H1 (cell line): ENCODE measurements at regions of chr18 and their contacts with region 1.

Region 1: DNA sequence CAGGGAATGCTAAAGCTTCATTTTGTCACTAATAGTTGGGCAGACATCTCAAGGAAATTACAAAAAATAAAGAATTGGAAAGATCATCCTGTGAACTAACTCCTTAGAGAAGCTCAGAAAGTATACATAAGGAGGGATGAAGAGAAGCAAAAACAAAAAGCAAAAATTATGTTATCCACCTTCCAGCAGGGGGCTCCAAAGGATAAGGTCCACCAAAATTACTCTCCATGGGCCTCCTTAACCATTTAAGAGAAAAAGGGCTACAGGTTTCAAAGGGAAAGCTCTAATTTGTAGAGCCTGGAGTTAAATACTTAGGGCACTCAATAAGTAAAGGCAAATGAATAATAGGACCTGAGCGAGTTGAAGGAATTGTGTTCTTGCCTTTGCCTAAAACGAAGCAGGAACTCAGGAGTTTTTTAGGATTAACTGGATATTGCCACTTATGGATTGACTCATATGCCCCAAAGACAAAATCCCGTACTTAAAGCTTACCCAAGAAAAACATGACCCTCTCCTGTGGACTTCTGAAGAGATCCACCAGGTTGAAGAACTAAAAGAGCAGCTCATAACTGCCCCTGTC is 1167.9 kb downstream of the DSC3 start:
- DNase-seq: no peak
- H3K4me3 ChIP-seq: no peak overlapping the region
- H3K27ac ChIP-seq: no peak overlapping the region
- H3K4me1 ChIP-seq: no peaks in the 10 kb centered on the region; a peak in 1 of 7 replicates
- H3K27me3 ChIP-seq: no peaks in the 10 kb centered on the region
- CTCF ChIP-seq: peak in 2 of 3 experiments; percentile 47 to 52; a peak in 2 of 4 replicates
- EP300 ChIP-seq: no peak
- POLR2A ChIP-seq: no peak
- RAD21 ChIP-seq: peak; percentile 82 to 86

Region 2: GRCh38 chr18:29853126-29853525 is 21.5 kb before region 1 on chr18:
- CTCF ChIA-PET with region 1: interaction called, 17 read pairs
- POLR2A ChIA-PET with region 1: no interaction called
- DNase-seq: no peak
- H3K4me3 ChIP-seq: no peak overlapping the region
- H3K27ac ChIP-seq: no peak overlapping the region
- H3K4me1 ChIP-seq: no peaks in the 10 kb centered on the region
- H3K27me3 ChIP-seq: no peaks in the 10 kb centered on the region
- CTCF ChIP-seq: no peak
- EP300 ChIP-seq: no peak
- POLR2A ChIP-seq: no peak
- RAD21 ChIP-seq: no peak

Region 3: DNA sequence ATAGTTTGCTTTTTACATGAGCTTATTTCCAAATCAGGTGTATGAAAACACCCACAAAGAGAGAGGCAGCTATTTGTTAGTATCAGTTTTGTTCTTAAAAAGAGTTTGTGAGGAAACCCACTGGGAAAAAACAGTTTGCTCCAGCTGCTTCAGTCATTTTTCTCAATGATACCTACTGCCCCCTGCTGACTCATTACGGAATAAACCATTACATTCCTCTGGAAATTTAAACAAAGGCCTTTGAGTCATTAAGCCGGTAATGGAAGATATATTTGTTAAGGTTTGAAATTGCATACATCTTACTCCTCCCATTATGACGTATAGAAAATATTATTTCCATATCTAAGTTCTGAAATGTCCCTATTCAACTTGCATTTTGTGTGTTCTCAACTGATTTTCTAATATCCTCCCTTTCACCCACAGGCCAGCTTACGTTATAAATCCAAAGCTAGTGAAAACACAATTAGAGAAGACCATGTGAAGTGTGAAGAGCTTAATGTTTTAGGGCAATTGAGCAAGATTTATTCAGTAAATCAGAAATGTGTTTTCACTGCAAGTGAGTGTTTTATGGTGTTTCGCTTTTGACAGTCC is 406.4 kb after region 1 on chr18:
- CTCF ChIA-PET with region 1: interaction called, 28 read pairs
- POLR2A ChIA-PET with region 1: no interaction called
- DNase-seq: no peak
- H3K4me3 ChIP-seq: no peak overlapping the region
- H3K27ac ChIP-seq: no peak overlapping the region
- H3K4me1 ChIP-seq: no peaks in the 10 kb centered on the region; a peak in 1 of 7 replicates
- H3K27me3 ChIP-seq: no peaks in the 10 kb centered on the region
- CTCF ChIP-seq: peak in 2 of 3 experiments; percentile 39 to 61; a peak in 2 of 4 replicates
- EP300 ChIP-seq: no peak
- POLR2A ChIP-seq: no peak
- RAD21 ChIP-seq: peak; percentile 54 to 67

Region 4: GRCh38 chr18:30889519-30890301 is 1015.1 kb after region 1 on chr18:
- CTCF ChIA-PET with region 1: interaction called, 12 read pairs
- POLR2A ChIA-PET with region 1: no interaction called
- DNase-seq: no peak
- H3K4me3 ChIP-seq: no peak overlapping the region
- H3K27ac ChIP-seq: no peak overlapping the region
- H3K4me1 ChIP-seq: 0 out of 7 replicates have a peak, but pooled peaks cover 0 to 2% (median 0%) of the 10 kb centered on the region in 4 experiments
- H3K27me3 ChIP-seq: no peaks in the 10 kb centered on the region
- CTCF ChIP-seq: peak in 2 of 3 experiments; percentile 66 to 80; a peak in 3 of 4 replicates
- EP300 ChIP-seq: no peak
- POLR2A ChIP-seq: no peak
- RAD21 ChIP-seq: peak; percentile 95 to 97